Natural killer cell (primary cell): ENCODE measurements at regions of chr9 and their contacts with region 1.

Region 1: GRCh38 chr9:132163457-132163875 is 1.6 kb downstream of the NTNG2 start:
- DNase-seq: peak in 1 of 2 donors; percentile 21
- ATAC-seq: no peak
- H3K4me3 ChIP-seq: no peak overlapping the region
- H3K4me3 Mint-ChIP-seq: peak overlapping the region; percentile 78
- H3K27ac ChIP-seq: no peak overlapping the region
- H3K27ac Mint-ChIP-seq: no peak overlapping the region
- H3K4me1 ChIP-seq: peaks cover 27% of the 10 kb centered on the region
- H3K4me1 Mint-ChIP-seq: peaks cover 6 to 18% of the 10 kb centered on the region in 2 donors
- H3K27me3 ChIP-seq: peaks cover 11% of the 10 kb centered on the region
- H3K27me3 Mint-ChIP-seq: peaks cover 24 to 42% of the 10 kb centered on the region in 2 donors
- CTCF ChIP-seq: no peak

Region 2: GRCh38 chr9:132079391-132080091 is 83.9 kb before region 1 on chr9 and contains the start of gene MED27:
- intact Hi-C with region 1: loop called (anchors 2 kb)
- DNase-seq: peak; percentile 93 to 97
- ATAC-seq: peak; percentile 96 to 98 (median 97)
- H3K4me3 ChIP-seq: peak within 1 kb of the TSS; percentile 83
- H3K4me3 Mint-ChIP-seq: peak within 1 kb of the TSS; percentile 98
- H3K27ac ChIP-seq: peak within 1 kb of the TSS; percentile 60
- H3K27ac Mint-ChIP-seq: peak within 1 kb of the TSS; percentile 87 to 90
- H3K4me1 ChIP-seq: peaks cover 14% of the 10 kb centered on the region
- H3K4me1 Mint-ChIP-seq: peaks cover 35% of the 10 kb centered on the region in 2 donors
- H3K27me3 ChIP-seq: no peaks in the 10 kb centered on the region
- H3K27me3 Mint-ChIP-seq: peaks cover 3 to 9% of the 10 kb centered on the region in 2 donors
- CTCF ChIP-seq: no peak
- total RNA-seq, gene MED27: 24.4 to 27.3 (median 26.9) TPM